Activated naive CD4-positive, alpha-beta T cell treated with anti-CD3 and anti-CD28 coated beads for 36 hours (primary cell): ENCODE measurements at regions of chr14 and their contacts with region 1.

Region 1: DNA sequence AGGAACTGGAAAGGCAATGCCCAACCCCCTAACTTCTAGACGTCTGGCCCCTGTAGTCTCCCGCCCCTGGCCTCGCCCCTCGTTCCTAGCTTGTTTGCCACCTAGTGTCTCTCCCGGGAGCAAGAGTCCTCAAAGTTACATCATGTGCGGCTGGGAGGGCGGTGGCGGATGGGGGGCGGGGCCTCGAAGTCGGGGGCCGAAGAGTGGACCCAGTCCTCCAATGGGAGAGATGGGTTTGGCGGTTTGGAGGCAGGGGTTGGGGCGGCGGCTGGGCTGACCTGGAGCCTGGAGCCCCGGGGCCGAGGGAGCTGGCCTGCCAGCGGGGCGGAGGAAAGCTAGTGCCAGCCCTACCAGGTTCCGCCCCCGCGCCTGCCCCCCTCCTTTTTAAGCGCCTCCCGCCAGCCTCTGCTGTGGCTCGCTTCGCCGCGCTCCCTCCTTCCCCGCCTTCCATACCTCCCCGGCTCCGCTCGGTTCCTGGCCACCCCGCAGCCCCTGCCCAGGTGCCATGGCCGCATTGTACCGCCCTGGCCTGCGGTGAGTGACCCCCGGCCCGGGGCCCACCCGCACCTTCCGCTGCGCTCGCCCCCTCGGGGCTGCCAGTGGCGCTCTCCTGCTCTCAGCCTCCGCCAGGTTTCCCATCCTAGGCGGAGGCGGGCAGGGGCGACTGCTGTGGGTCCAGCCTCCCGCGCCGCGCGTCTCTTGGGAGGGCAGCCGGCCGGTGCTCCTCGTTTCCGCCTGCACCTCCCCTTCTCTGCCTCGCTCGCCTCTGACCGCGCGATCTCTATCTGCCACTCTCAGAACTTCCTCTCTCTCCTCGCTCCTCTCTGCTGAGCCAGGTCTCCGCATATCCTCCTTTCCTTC is at the start of gene PCK2:
- DNase-seq: peak; percentile 94
- H3K4me3 Mint-ChIP-seq: peak within 1 kb of the TSS; percentile 99
- H3K27ac Mint-ChIP-seq: peak within 1 kb of the TSS; percentile 98
- H3K4me1 Mint-ChIP-seq: peaks cover 32% of the 10 kb centered on the region
- H3K27me3 Mint-ChIP-seq: no peaks in the 10 kb centered on the region
- total RNA-seq, gene PCK2: 117 TPM

Region 2: DNA sequence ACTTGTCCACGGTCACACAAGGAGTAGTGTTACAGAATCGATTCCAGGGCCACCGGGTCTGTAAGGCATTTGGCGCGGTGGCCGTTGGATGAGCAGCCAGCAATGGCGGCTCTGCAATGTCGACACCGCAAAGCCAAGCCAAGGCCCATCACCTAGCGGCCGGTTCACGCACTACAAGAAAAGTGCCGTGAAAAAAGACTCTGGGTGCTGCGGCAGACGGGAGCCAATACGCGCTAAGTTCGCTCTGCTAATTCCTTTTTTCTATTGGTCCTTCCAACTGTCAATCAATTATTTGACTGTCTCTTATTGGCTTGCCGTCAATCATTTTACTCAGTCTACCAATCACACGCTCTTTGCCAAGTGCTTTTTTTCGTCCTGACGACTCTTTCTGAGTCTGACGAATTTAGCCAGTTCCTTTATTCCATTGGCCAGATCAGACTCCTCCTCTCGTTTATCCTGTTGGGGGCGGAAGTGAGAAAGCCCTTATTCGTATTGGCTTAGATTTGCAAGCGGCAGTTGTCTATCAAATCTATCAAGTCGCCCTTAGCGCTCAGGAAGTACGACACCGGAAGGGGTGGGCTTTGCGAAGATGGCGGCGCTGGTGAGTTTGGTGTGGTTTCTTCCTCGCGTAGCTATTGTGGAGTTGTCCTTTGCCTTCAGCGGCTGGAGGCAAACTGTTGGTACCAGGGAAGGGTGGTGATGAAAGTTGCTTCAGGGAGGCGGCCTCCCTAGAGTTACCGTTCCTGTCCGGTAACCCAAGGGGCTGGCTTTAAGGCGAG is 624.8 kb before region 1 on chr14 and contains the start of gene NGDN:
- CTCF ChIA-PET with region 1: no interaction called
- intact Hi-C with region 1: loop called (anchors 2 kb)
- DNase-seq: peak; percentile 96
- H3K4me3 Mint-ChIP-seq: no peak within 1 kb of the TSS
- H3K27ac Mint-ChIP-seq: no peak within 1 kb of the TSS
- H3K4me1 Mint-ChIP-seq: peaks cover 11% of the 10 kb centered on the region
- H3K27me3 Mint-ChIP-seq: no peaks in the 10 kb centered on the region
- total RNA-seq, gene NGDN: 38.9 to 40.8 TPM

Region 3: GRCh38 chr14:24080888-24081738 is 13.0 kb before region 1 on chr14:
- CTCF ChIA-PET with region 1: interaction called, 76 read pairs
- intact Hi-C with region 1: no loop called
- DNase-seq: peak; percentile 74
- H3K4me3 Mint-ChIP-seq: peak overlapping the region; percentile 74
- H3K27ac Mint-ChIP-seq: no peak overlapping the region
- H3K4me1 Mint-ChIP-seq: peaks cover 15% of the 10 kb centered on the region
- H3K27me3 Mint-ChIP-seq: no peaks in the 10 kb centered on the region

Region 4: DNA sequence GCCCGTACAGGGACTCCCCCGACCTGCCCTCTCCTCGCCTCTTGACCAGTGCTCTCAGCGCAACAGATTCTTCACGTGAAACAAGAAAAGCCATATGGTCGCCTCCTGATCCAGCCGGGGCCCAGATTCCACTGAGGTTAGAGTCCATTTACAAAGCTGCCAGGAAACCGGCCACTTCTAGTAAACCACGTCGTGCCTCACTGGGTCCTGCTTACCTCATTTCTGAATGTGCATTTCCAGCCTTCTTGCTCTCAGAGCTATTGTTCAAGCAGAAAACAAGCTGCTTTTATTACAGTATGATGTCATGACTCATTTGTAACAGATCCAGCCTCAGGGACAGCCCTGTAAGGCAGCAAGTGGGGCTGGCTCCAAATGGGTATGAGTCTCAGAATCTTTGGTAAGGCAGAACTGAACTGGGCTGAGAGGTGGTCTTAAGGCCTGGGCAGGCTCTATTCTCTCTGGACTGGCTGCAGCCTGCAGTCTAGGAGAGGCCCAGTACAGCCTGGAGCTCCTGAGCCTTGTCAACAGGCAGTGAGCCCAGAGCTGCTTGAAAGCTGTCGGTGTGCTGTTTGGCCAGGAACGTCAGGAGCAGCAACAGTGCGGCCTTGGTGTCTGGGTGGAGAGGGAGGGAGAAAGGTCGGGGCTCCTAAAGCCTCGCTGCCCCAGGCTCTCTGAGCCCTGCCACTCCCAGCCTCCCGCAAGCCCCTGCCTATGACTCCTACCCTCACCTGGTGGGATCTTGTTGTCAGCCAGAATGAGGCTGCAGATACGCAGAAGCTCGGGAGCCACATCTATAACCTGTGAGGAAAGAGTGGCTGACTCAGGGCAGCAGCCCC is 86.0 kb after region 1 on chr14:
- CTCF ChIA-PET with region 1: no interaction called
- intact Hi-C with region 1: no loop called
- DNase-seq: no peak
- H3K4me3 Mint-ChIP-seq: no peak overlapping the region
- H3K27ac Mint-ChIP-seq: peak overlapping the region; percentile 22
- H3K4me1 Mint-ChIP-seq: no peaks in the 10 kb centered on the region
- H3K27me3 Mint-ChIP-seq: no peaks in the 10 kb centered on the region